Activated CD8-positive, alpha-beta T cell treated with anti-CD3 and anti-CD28 coated beads for 36 hours (primary cell): ENCODE measurements at regions of chr7 and their contacts with region 1.

Region 1: DNA sequence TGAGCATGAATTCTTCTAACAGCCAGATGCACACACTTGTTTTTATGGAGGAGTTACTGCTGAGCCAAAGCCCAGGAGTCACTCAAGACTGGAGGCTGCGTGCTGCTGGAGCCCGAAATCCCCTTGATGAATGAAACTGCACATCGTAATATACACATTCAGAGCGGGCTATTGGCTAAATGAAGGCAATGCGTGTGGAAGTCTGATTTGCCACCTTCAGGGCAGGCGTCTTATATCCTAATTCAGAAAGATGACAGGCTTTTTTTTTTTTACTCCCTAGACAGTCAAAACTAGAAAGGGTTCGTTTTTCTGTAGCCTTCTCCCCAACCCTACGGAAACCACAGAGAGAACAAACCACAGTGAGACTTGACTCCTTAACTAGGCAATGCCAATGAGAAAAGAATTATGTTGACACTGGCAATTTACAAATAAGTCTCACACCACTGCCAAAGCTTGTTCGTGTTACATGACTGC is 227.2 kb upstream of the KLF14 start:
- DNase-seq: peak; percentile 91
- ATAC-seq: peak; percentile 89
- H3K4me3 Mint-ChIP-seq: no peak overlapping the region
- H3K27ac Mint-ChIP-seq: peak overlapping the region; percentile 99
- H3K4me1 Mint-ChIP-seq: peaks cover 34% of the 10 kb centered on the region
- H3K27me3 Mint-ChIP-seq: no peaks in the 10 kb centered on the region
- CTCF ChIP-seq: no peak

Region 2: DNA sequence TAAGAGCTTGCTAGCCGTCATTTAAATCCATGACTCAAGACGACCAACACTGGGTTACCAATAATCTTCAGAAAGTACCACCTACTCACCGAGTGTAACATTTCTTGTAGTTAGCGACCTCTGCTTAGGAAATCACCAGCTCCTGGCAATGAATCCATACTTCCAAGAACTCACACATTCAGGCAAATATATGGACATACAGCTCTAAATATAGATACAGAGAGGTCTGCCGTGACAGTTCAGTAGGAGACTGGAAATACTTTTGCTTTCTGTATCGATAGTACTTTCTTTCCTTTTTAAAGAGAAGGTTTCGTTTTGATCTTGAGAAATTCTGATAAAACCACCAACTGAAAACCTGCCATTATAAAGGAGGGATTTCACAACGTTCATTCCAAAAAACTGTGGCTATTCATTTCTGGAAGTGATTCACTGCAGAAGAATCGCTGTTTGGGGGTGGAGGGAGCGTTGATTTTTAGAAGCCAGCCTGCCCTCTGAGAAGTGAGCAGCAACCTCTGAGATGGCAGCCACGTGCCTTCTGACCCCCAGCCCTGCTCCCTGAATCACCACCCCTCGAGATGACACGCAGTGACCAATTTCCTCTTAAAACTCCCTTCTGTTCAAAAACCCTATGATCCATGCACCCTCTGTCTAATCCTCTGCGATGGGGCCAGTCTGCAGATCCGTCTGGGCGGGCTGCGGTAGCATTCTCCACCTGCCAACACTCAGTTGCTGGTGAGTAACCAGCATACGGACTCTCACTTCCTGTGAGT is 48.1 kb before region 1 on chr7:
- CTCF ChIA-PET with region 1: interaction called, 6 read pairs
- POLR2A ChIA-PET with region 1: no interaction called
- intact Hi-C with region 1: loop called (anchors 2 kb)
- DNase-seq: peak; percentile 93
- ATAC-seq: peak; percentile 79
- H3K4me3 Mint-ChIP-seq: peak overlapping the region; percentile 87
- H3K27ac Mint-ChIP-seq: peak overlapping the region; percentile 97
- H3K4me1 Mint-ChIP-seq: peaks cover 85% of the 10 kb centered on the region
- H3K27me3 Mint-ChIP-seq: no peaks in the 10 kb centered on the region
- CTCF ChIP-seq: no peak

Region 3: GRCh38 chr7:131007394-131008330 is 46.5 kb after region 1 on chr7:
- CTCF ChIA-PET with region 1: interaction called, 5 read pairs
- POLR2A ChIA-PET with region 1: interaction called, 118 read pairs
- intact Hi-C with region 1: loop called (anchors 5 kb)
- DNase-seq: peak; percentile 79
- ATAC-seq: peak; percentile 24
- H3K4me3 Mint-ChIP-seq: peak overlapping the region; percentile 59
- H3K27ac Mint-ChIP-seq: peak overlapping the region; percentile 99
- H3K4me1 Mint-ChIP-seq: peaks cover 82% of the 10 kb centered on the region
- H3K27me3 Mint-ChIP-seq: no peaks in the 10 kb centered on the region
- CTCF ChIP-seq: peak; percentile 59

Region 4: DNA sequence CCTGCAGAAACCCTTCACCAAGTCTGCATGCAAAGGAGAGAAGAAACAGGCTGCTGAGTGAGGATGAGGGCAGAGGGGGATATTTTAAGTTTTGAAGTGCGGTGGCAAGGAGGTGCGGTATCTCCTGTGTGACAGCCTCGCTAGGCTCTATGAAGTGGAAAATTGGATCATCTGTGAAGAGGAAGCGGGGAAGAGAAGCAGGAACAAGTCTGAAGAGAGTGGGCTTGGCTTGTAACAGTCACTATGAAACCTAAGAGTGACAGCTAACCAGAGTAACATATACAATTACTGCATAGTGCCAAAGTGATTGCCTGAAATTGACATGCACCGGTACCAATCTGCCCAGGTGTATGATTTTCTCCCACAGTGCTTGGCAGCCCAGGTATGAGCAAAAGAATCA is 60.3 kb after region 1 on chr7:
- CTCF ChIA-PET with region 1: interaction called, 3 read pairs
- POLR2A ChIA-PET with region 1: interaction called, 18 read pairs
- intact Hi-C with region 1: no loop called
- DNase-seq: no peak
- ATAC-seq: peak; percentile 54
- H3K4me3 Mint-ChIP-seq: peak overlapping the region; percentile 22
- H3K27ac Mint-ChIP-seq: peak overlapping the region; percentile 88
- H3K4me1 Mint-ChIP-seq: peaks cover 77% of the 10 kb centered on the region
- H3K27me3 Mint-ChIP-seq: no peaks in the 10 kb centered on the region
- CTCF ChIP-seq: no peak

Region 5: GRCh38 chr7:131040467-131040932 is 79.3 kb after region 1 on chr7:
- CTCF ChIA-PET with region 1: interaction called, 16 read pairs
- POLR2A ChIA-PET with region 1: interaction called, 41 read pairs
- intact Hi-C with region 1: no loop called
- DNase-seq: peak; percentile 75
- ATAC-seq: peak; percentile 84
- H3K4me3 Mint-ChIP-seq: peak overlapping the region; percentile 30
- H3K27ac Mint-ChIP-seq: peak overlapping the region; percentile 70
- H3K4me1 Mint-ChIP-seq: peaks cover 62% of the 10 kb centered on the region
- H3K27me3 Mint-ChIP-seq: no peaks in the 10 kb centered on the region
- CTCF ChIP-seq: peak; percentile 97

Region 6: GRCh38 chr7:131107337-131108211 is 146.4 kb after region 1 on chr7:
- CTCF ChIA-PET with region 1: no interaction called
- POLR2A ChIA-PET with region 1: interaction called, 50 read pairs
- intact Hi-C with region 1: no loop called
- DNase-seq: peak; percentile 88
- ATAC-seq: peak; percentile 40
- H3K4me3 Mint-ChIP-seq: peak overlapping the region; percentile 97
- H3K27ac Mint-ChIP-seq: peak overlapping the region; percentile 100
- H3K4me1 Mint-ChIP-seq: peaks cover 65% of the 10 kb centered on the region
- H3K27me3 Mint-ChIP-seq: no peaks in the 10 kb centered on the region
- CTCF ChIP-seq: no peak